Sigmoid colon (tissue), 7 donors: ENCODE measurements at regions of chr18 and their contacts with region 1.

Region 1: GRCh38 chr18:22983175-22983574 is 50.0 kb downstream of the RBBP8 start:
- DNase-seq: no peak
- H3K4me3 ChIP-seq: no peak overlapping the region
- H3K27ac ChIP-seq: no peak overlapping the region
- H3K4me1 ChIP-seq: no peaks in the 10 kb centered on the region
- H3K27me3 ChIP-seq: no peaks in the 10 kb centered on the region
- CTCF ChIP-seq: peak; percentile 17 to 49 (median 30)
- EP300 ChIP-seq: no peak
- POLR2A ChIP-seq: no peak

Region 2: DNA sequence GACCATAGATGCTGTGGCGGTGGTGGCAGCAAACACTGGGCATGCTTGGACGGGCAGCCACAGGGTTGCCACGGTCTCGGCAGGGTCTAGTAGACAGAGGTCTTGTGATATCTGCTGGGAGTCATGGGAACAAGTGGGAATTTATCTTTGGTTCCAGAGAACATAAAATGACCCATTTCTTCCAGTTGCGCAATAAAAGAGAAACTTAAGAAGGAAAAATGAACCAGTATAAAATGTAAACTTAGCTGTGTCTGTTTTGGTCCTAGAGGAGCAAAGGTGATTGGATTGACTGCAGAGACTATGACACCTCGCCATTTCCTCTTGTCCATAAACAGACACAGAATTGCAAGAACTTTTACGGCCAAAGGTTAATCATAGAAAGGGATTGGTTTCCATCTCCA is 182.6 kb before region 1 on chr18:
- intact Hi-C with region 1: loop called (anchors 2 kb)
- DNase-seq: peak; percentile 70
- H3K4me3 ChIP-seq: no peak overlapping the region
- H3K27ac ChIP-seq: peak overlapping the region in 3 of 4 donors; percentile 42 to 57 (median 43)
- H3K4me1 ChIP-seq: peaks cover 0 to 18% (median 11%) of the 10 kb centered on the region in 4 donors
- H3K27me3 ChIP-seq: no peaks in the 10 kb centered on the region
- CTCF ChIP-seq: no peak
- EP300 ChIP-seq: no peak
- POLR2A ChIP-seq: no peak

Region 3: GRCh38 chr18:23032030-23032582 is 48.9 kb after region 1 on chr18:
- intact Hi-C with region 1: no loop called
- DNase-seq: no peak
- H3K4me3 ChIP-seq: no peak overlapping the region
- H3K27ac ChIP-seq: no peak overlapping the region
- H3K4me1 ChIP-seq: no peaks in the 10 kb centered on the region
- H3K27me3 ChIP-seq: no peaks in the 10 kb centered on the region
- CTCF ChIP-seq: no peak
- EP300 ChIP-seq: no peak
- POLR2A ChIP-seq: no peak